Left cardiac atrium (tissue), 4 donors: ENCODE measurements at regions of chr5 and their contacts with region 1.

Region 1: DNA sequence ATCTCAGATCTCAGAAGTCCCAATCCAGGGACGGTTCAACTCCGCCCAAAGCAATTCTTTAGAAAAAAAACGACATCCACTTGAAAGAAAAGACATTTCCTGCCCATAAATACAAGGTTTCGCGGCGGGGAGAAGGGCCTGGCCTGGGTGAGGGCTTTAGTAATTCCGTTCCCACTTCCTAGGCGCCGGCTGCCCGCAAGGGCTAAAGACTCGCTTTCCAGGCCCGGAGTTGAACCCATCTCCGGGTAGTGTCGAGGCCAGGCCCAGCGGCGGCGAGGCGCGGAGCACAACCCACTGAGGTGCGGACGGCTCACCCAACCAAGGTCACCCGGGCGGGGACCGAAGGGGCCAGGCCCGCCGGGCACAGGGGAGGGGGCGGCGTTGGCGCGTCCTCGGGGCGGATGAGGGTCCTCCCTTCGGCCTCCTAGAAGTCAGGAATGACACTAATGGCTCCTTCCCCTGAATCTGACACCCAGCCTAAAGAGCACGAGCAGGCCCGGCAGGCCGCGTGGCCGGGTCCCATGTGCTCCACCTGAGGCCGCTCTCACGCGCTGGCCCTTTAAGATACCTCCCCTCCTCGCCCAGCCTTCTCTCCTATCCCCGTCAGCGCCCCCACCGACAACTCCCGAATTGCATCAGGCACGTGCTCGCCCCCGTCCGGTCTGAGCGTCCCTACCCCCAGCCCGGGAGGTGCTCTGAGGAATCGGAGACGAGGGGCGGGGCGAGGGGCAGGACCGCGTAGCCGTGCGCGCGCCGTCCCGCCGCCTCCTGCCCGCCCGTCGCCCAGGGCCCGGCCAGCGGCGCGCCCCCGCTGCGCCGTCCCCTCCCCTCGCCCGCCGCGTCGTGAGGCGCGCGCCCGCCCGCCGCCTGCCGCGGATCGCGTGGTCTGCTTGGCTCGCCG is 467 bp upstream of the LARP1 start:
- DNase-seq: peak; percentile 99
- ATAC-seq: peak; percentile 93

Region 2: GRCh38 chr5:154547551-154547950 is 207.2 kb before region 1 on chr5:
- intact Hi-C with region 1: no loop called
- DNase-seq: no peak
- ATAC-seq: no peak

Region 3: DNA sequence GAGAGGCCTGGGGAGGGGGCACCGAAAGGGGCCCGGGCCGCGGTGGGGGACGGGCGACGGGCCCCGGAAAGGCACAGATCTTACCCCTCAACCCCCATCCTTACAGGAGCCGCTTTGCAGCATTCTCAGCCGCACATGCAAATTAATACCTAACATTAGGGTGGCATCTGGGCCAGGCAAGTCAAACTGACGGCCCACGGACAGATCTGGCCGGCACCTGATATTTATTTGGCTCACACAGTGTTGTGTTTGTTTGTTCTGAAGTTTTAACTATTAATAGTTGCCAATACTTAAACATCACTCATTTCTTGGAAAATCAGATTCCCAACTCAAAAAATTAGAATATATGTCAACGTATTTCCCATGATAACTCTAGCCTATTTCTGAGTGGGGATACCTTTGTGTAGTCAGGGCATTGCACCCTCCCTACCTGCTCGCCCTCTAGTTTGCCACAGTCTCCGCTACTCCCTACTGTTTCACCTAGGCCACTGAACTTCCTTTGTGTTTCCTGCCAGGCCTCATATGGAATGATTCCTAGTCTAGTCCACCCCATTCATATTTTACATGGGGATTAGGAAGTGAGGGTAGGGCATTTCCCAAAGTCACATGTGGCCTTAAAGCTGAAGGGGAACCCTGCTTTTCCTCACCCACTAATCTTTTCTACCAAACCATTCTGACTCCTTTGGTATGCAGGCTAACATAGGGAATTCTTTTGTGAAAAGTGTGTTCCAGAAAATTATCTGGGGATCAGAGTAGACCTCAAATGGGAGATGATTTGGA is 71.4 kb before region 1 on chr5:
- intact Hi-C with region 1: loop called in 1 of 2 experiments (anchors 5 kb)
- DNase-seq: no peak
- ATAC-seq: peak in 1 of 2 donors; percentile 27

Region 4: GRCh38 chr5:154791535-154791934 is 36.8 kb after region 1 on chr5:
- intact Hi-C with region 1: loop called in 1 of 2 experiments (anchors 5 kb)
- DNase-seq: no peak
- ATAC-seq: no peak

Region 5: GRCh38 chr5:154857530-154858296 is 103.0 kb after region 1 on chr5:
- intact Hi-C with region 1: loop called in 1 of 2 experiments (anchors 5 kb)
- DNase-seq: peak; percentile 97
- ATAC-seq: peak; percentile 84 to 89